H1 (cell line): ENCODE measurements at regions of chr18 and their contacts with region 1.

Region 1: GRCh38 chr18:45664824-45665763 is 49.8 kb downstream of the SLC14A2 start:
- DNase-seq: peak; percentile 27 to 70
- H3K4me3 ChIP-seq: no peak overlapping the region
- H3K27ac ChIP-seq: no peak overlapping the region
- H3K4me1 ChIP-seq: peaks cover 0 to 13% (median 3%) of the 10 kb centered on the region in 4 experiments; a peak in 6 of 7 replicates
- H3K27me3 ChIP-seq: no peaks in the 10 kb centered on the region
- CTCF ChIP-seq: peak; percentile 52 to 89 (median 87)
- EP300 ChIP-seq: no peak
- POLR2A ChIP-seq: no peak
- RAD21 ChIP-seq: peak; percentile 95

Region 2: GRCh38 chr18:45652303-45653080 is 12.6 kb before region 1 on chr18:
- CTCF ChIA-PET with region 1: interaction called, 66 read pairs
- POLR2A ChIA-PET with region 1: no interaction called
- DNase-seq: no peak
- H3K4me3 ChIP-seq: no peak overlapping the region
- H3K27ac ChIP-seq: no peak overlapping the region
- H3K4me1 ChIP-seq: peaks cover 0 to 8% (median 2%) of the 10 kb centered on the region in 4 experiments; a peak in 4 of 7 replicates
- H3K27me3 ChIP-seq: no peaks in the 10 kb centered on the region
- CTCF ChIP-seq: no peak
- EP300 ChIP-seq: no peak
- POLR2A ChIP-seq: no peak
- RAD21 ChIP-seq: no peak

Region 3: GRCh38 chr18:45690975-45691815 is 26.1 kb after region 1 on chr18:
- CTCF ChIA-PET with region 1: interaction called, 83 read pairs
- POLR2A ChIA-PET with region 1: no interaction called
- DNase-seq: peak; percentile 46 to 90
- H3K4me3 ChIP-seq: no peak overlapping the region
- H3K27ac ChIP-seq: no peak overlapping the region
- H3K4me1 ChIP-seq: peaks cover 5 to 9% (median 7%) of the 10 kb centered on the region in 4 experiments
- H3K27me3 ChIP-seq: no peaks in the 10 kb centered on the region
- CTCF ChIP-seq: peak; percentile 81 to 96 (median 93)
- EP300 ChIP-seq: no peak
- POLR2A ChIP-seq: no peak
- RAD21 ChIP-seq: peak; percentile 98 to 99

Region 4: GRCh38 chr18:45702866-45703265 is 37.8 kb after region 1 on chr18:
- CTCF ChIA-PET with region 1: no interaction called
- POLR2A ChIA-PET with region 1: no interaction called
- DNase-seq: no peak
- H3K4me3 ChIP-seq: no peak overlapping the region
- H3K27ac ChIP-seq: no peak overlapping the region
- H3K4me1 ChIP-seq: no peaks in the 10 kb centered on the region
- H3K27me3 ChIP-seq: no peaks in the 10 kb centered on the region
- CTCF ChIP-seq: no peak
- EP300 ChIP-seq: no peak
- POLR2A ChIP-seq: no peak
- RAD21 ChIP-seq: no peak

Region 5: DNA sequence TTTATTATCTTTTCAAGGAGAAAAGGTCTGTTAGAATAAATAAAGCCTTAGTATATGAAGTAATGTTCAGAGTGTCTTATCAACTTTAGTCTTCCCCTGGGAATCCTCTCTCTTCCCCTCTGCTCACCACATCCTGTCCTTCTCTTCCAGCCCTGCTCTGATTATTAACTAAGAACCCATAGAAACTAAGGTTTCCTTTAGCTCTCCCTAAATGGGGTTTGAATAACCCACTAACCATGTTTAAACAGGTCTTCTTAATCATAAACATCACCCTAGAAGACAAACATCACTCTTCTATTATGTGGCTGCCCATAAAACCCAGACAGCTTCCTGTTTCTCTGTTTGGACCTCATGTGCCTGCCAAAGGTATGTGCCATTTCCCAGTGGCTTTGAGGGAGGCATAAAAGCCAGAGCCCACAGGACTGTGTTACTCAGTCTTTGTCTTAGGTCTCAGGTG is 109.0 kb after region 1 on chr18:
- CTCF ChIA-PET with region 1: no interaction called
- POLR2A ChIA-PET with region 1: no interaction called
- DNase-seq: no peak
- H3K4me3 ChIP-seq: no peak overlapping the region
- H3K27ac ChIP-seq: no peak overlapping the region
- H3K4me1 ChIP-seq: no peaks in the 10 kb centered on the region
- H3K27me3 ChIP-seq: no peaks in the 10 kb centered on the region; a peak in 2 of 7 replicates
- CTCF ChIP-seq: no peak
- EP300 ChIP-seq: no peak
- POLR2A ChIP-seq: no peak
- RAD21 ChIP-seq: no peak

Region 6: DNA sequence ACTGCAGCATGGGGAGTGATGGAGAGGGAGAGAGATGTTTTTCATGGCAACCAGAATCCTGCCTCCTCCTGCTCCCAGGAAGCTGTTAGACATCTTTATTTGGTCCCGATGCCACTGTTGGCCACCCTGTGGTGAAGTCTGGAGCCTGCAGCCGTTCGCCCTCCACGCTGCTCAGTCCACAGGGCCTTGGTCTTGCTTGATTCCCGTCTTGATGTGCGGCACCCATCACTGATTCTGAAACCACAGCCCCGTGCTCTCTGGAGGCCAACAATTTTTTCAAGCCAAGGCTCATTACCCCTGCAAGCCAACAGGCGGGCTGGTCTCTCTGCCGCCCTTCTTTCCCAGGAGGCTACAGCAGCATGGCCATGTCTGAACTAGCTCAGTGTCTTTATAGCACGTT is 184.9 kb after region 1 on chr18:
- CTCF ChIA-PET with region 1: interaction called, 41 read pairs
- POLR2A ChIA-PET with region 1: no interaction called
- DNase-seq: peak in 1 of 2 experiments; percentile 56
- H3K4me3 ChIP-seq: no peak overlapping the region
- H3K27ac ChIP-seq: no peak overlapping the region
- H3K4me1 ChIP-seq: no peaks in the 10 kb centered on the region
- H3K27me3 ChIP-seq: no peaks in the 10 kb centered on the region
- CTCF ChIP-seq: peak; percentile 61 to 76 (median 75)
- EP300 ChIP-seq: no peak
- POLR2A ChIP-seq: no peak
- RAD21 ChIP-seq: peak; percentile 63 to 67

Region 7: GRCh38 chr18:45910405-45911023 is 245.4 kb after region 1 on chr18:
- CTCF ChIA-PET with region 1: interaction called, 33 read pairs
- POLR2A ChIA-PET with region 1: no interaction called
- DNase-seq: peak; percentile 33 to 72
- H3K4me3 ChIP-seq: no peak overlapping the region
- H3K27ac ChIP-seq: no peak overlapping the region
- H3K4me1 ChIP-seq: no peaks in the 10 kb centered on the region
- H3K27me3 ChIP-seq: no peaks in the 10 kb centered on the region
- CTCF ChIP-seq: peak; percentile 89
- EP300 ChIP-seq: no peak
- POLR2A ChIP-seq: no peak
- RAD21 ChIP-seq: peak; percentile 90 to 91